Ascending aorta (tissue), 2 donors: ENCODE measurements at regions of chr12 and their contacts with region 1.

Region 1: GRCh38 chr12:110888256-110888991 is 32.0 kb downstream of the MYL2 start:
- DNase-seq: no peak
- H3K4me3 ChIP-seq: no peak overlapping the region
- H3K27ac ChIP-seq: no peak overlapping the region
- H3K4me1 ChIP-seq: no peaks in the 10 kb centered on the region
- H3K27me3 ChIP-seq: no peaks in the 10 kb centered on the region
- CTCF ChIP-seq: no peak

Region 2: GRCh38 chr12:110468212-110469048 is 420.0 kb before region 1 on chr12 and contains the starts of genes FAM216A and GPN3:
- intact Hi-C with region 1: loop called (anchors 5 kb)
- DNase-seq: peak; percentile 87 to 98
- H3K4me3 ChIP-seq: peak within 1 kb of the TSS; percentile 73 to 84
- H3K27ac ChIP-seq: peak within 1 kb of the TSS; percentile 88 to 92
- H3K4me1 ChIP-seq: peaks cover 6 to 17% of the 10 kb centered on the region in 2 donors
- H3K27me3 ChIP-seq: no peaks in the 10 kb centered on the region
- CTCF ChIP-seq: no peak
- total RNA-seq, gene FAM216A: 2.1 TPM
- total RNA-seq, gene GPN3: 5.6 TPM

Region 3: DNA sequence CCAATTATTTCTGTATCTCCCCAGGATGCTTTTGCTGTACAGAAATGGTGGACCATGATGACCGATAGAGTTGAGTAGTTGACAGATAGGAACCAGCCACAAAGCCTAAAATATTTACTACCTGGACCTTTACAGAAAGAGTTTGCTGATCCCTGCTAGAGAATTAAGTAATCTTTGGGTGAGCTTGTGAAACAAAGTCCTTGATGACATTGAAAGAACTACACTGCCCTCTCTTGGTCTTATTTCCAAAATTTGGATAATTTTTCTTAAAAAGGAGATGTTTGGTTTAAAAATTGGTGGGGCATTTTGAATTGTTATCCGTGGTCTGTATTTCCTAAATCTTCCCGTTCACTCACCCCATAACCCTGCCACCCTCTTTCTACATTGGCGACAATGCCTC is 288.2 kb before region 1 on chr12:
- intact Hi-C with region 1: loop called (anchors 5 kb)
- DNase-seq: no peak
- H3K4me3 ChIP-seq: no peak overlapping the region
- H3K27ac ChIP-seq: no peak overlapping the region
- H3K4me1 ChIP-seq: no peaks in the 10 kb centered on the region
- H3K27me3 ChIP-seq: no peaks in the 10 kb centered on the region
- CTCF ChIP-seq: peak; percentile 47 to 54 (median 48)

Region 4: GRCh38 chr12:110742718-110743570 is 145.5 kb before region 1 on chr12 and contains the start of gene PPP1CC:
- intact Hi-C with region 1: loop called (anchors 2 kb)
- DNase-seq: peak; percentile 81 to 97
- H3K4me3 ChIP-seq: peak within 1 kb of the TSS; percentile 86 to 97
- H3K27ac ChIP-seq: peak within 1 kb of the TSS; percentile 87 to 90
- H3K4me1 ChIP-seq: peaks cover 0 to 27% of the 10 kb centered on the region in 2 donors
- H3K27me3 ChIP-seq: no peaks in the 10 kb centered on the region
- CTCF ChIP-seq: peak in 1 of 3 experiments; percentile 14
- total RNA-seq, gene PPP1CC: 39.8 TPM